HEK293 (cell line): ENCODE measurements at regions of chr11 and their contacts with region 1.

Region 1: GRCh38 chr11:114774599-114775361 is 96.5 kb downstream of the NXPE2 start:
- H3K4me3 ChIP-seq: no peak overlapping the region
- H3K27ac ChIP-seq: no peak overlapping the region
- H3K4me1 ChIP-seq: no peaks in the 10 kb centered on the region
- CTCF ChIP-seq: peak; percentile 76; the same call in 1 of the 2 replicates

Region 2: DNA sequence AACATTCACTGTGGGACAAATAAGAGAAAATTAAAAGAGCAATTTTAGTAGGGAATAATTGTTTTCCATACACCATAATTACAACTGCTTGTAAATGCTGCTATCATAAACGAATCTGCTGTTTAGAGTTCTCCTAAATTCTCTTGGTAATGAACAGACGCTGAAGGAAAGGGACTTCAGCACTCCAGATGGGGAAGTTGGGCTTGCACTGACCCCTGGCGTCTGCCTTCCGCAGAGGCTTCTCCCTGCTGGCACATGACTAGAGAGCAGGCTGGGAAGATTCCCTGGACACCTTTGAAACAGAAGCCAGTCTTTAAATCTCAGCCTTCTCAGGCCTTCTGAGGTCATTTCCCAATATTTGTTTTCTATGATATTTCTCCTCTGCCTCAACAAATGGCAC is 12.4 kb before region 1 on chr11:
- CTCF ChIA-PET with region 1: interaction called, 15 read pairs
- POLR2A ChIA-PET with region 1: no interaction called
- H3K4me3 ChIP-seq: no peak overlapping the region
- H3K27ac ChIP-seq: no peak overlapping the region
- H3K4me1 ChIP-seq: no peaks in the 10 kb centered on the region
- CTCF ChIP-seq: peak; percentile 35; the same call in 1 of the 2 replicates